ENCODE measurements at regions of chr10 and their contacts with region 1.

Region 1: GRCh38 chr10:68560186-68560942 is at the start of gene TET1:
- DNase-seq: peak; percentile 90 to 91 (median 90)
- ATAC-seq: peak; percentile 76
- H3K4me3 ChIP-seq: peak within 1 kb of the TSS; percentile 88
- H3K27ac ChIP-seq: peak within 1 kb of the TSS; percentile 95
- H3K4me1 ChIP-seq: peaks cover 22 to 29% of the 10 kb centered on the region in 2 experiments
- H3K27me3 ChIP-seq: no peaks in the 10 kb centered on the region
- CTCF ChIP-seq: no peak
- EP300 ChIP-seq: 0 out of 2 replicates have a peak, but pooled peaks have one; percentile 46
- POLR2A ChIP-seq: peak; percentile 91
- RAD21 ChIP-seq: peak in 1 of 2 experiments; percentile 14; a peak in 2 of 4 replicates
- polyA plus RNA-seq, gene TET1: 2.6 to 3.6 TPM

Region 2: GRCh38 chr10:68406815-68407548 is 153.4 kb before region 1 on chr10 and contains the start of gene RUFY2:
- CTCF ChIA-PET with region 1: no interaction called
- POLR2A ChIA-PET with region 1: no interaction called
- in situ Hi-C with region 1: no loop called
- intact Hi-C with region 1: loop called (anchors 5 kb)
- DNase-seq: peak; percentile 91 to 96 (median 94)
- ATAC-seq: peak; percentile 96
- H3K4me3 ChIP-seq: peak within 1 kb of the TSS; percentile 97
- H3K27ac ChIP-seq: peak within 1 kb of the TSS; percentile 91
- H3K4me1 ChIP-seq: peaks cover 14 to 25% of the 10 kb centered on the region in 2 experiments; a peak in 4 of 5 replicates
- H3K27me3 ChIP-seq: no peaks in the 10 kb centered on the region
- CTCF ChIP-seq: peak; percentile 69 to 95 (median 77)
- EP300 ChIP-seq: no peak
- POLR2A ChIP-seq: peak; percentile 88
- RAD21 ChIP-seq: peak; percentile 20 to 24; a peak in 2 of 4 replicates
- polyA plus RNA-seq, gene RUFY2: 3.7 to 4.5 TPM

Region 3: DNA sequence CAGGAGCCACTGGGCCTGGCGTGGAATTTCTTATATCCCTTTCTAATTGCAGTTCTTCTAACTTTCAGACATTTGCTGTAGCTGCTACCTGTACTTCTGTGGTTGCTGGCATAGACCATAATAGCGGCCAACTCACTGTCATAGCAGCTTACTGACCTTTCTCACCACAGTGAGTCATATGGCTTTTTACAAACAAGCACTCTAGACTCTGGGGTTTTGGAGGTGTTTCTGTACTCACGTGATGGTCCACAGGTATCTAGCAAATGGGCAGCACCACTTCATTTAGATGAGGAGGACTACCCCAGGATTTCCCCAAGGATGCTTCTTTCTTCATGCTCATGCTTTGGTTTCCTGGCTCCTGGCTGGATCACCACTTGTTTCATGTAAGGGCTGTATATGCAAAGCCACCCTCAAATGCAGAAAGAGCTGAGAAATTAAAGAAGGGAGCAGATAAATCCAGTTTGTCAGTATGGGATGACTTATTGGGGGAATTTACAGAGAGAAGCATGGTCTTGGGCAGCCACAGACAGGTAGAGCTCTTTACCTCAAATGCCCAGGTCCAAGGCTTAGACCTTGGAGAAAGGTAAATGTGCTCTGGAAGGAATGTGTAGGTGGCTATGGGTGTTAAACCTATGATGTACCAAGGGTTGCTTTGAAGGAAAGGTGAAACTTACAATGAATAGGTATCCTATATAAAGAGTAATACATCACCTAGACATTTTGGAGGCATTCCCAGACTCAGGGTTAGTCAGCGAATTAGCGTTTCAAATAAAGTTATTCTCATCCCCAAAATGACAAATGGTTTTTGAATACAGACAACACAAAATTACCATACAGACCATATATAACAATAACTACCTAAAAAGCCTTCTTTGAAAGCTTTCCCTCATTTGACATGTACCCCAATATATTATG is 17.1 kb before region 1 on chr10:
- CTCF ChIA-PET with region 1: no interaction called
- POLR2A ChIA-PET with region 1: interaction called, 11 read pairs
- in situ Hi-C with region 1: no loop called
- intact Hi-C with region 1: no loop called
- DNase-seq: peak in 2 of 4 experiments; percentile 46 to 50
- ATAC-seq: peak; percentile 81
- H3K4me3 ChIP-seq: no peak overlapping the region
- H3K27ac ChIP-seq: no peak overlapping the region
- H3K4me1 ChIP-seq: peaks cover 4 to 17% of the 10 kb centered on the region in 2 experiments; a peak in 3 of 5 replicates
- H3K27me3 ChIP-seq: no peaks in the 10 kb centered on the region
- CTCF ChIP-seq: no peak
- EP300 ChIP-seq: no peak
- POLR2A ChIP-seq: no peak
- RAD21 ChIP-seq: no peak

Region 4: GRCh38 chr10:68578974-68579373 is 18.6 kb after region 1 on chr10:
- CTCF ChIA-PET with region 1: no interaction called
- POLR2A ChIA-PET with region 1: interaction called, 16 read pairs
- in situ Hi-C with region 1: no loop called
- intact Hi-C with region 1: no loop called
- DNase-seq: no peak
- ATAC-seq: no peak
- H3K4me3 ChIP-seq: no peak overlapping the region
- H3K27ac ChIP-seq: no peak overlapping the region
- H3K4me1 ChIP-seq: no peaks in the 10 kb centered on the region
- H3K27me3 ChIP-seq: no peaks in the 10 kb centered on the region
- CTCF ChIP-seq: no peak
- EP300 ChIP-seq: no peak
- POLR2A ChIP-seq: no peak
- RAD21 ChIP-seq: no peak

Region 5: DNA sequence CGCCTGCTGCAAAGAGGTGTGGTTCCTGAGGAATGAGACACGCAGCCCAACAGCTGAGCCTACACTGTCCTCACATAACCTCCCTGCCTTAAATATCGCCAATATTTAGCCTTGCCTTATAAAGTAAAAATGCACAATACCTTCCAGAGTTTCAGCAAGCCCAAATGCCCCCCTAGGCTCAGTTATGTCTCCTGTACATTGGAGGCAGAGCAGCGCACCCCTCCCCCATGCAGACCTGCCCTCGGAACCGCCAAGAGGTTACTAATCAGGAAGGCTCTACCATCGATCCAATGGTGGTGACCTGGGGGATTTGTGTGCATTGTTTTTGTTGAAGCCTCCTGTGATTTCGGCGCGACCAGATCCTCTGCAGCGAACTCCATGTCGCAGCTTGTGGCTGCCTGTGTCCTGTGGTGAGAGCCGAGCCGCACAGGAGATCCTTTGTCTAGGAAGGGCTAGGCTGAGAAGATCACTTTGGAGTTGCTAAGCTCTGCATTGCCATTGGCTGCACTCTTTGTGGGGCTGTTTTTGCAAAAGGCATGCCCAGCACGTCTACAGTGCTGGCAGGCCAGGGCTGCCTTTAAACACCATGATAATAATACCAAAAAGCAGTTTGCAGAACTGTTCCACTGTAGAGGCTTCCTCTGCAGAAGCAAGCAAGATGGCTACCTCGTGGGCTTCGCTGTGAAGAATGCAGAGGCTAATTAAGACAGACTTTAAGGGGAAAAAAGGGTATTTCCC is 39.8 kb after region 1 on chr10:
- CTCF ChIA-PET with region 1: no interaction called
- POLR2A ChIA-PET with region 1: interaction called, 25 read pairs
- in situ Hi-C with region 1: no loop called
- intact Hi-C with region 1: loop called (anchors 1 kb)
- DNase-seq: peak; percentile 58 to 74 (median 66)
- ATAC-seq: peak; percentile 93
- H3K4me3 ChIP-seq: peak overlapping the region; percentile 30
- H3K27ac ChIP-seq: peak overlapping the region; percentile 71; the same call in 2 of the 3 replicates
- H3K4me1 ChIP-seq: peaks cover 18 to 26% of the 10 kb centered on the region in 2 experiments
- H3K27me3 ChIP-seq: no peaks in the 10 kb centered on the region
- CTCF ChIP-seq: no peak
- EP300 ChIP-seq: no peak
- POLR2A ChIP-seq: no peak
- RAD21 ChIP-seq: peak in 1 of 2 experiments; percentile 15; a peak in 1 of 4 replicates

Measured in K562 (cell line).